ENCODE measurements at regions of chr5 and their contacts with region 1.

Region 1: DNA sequence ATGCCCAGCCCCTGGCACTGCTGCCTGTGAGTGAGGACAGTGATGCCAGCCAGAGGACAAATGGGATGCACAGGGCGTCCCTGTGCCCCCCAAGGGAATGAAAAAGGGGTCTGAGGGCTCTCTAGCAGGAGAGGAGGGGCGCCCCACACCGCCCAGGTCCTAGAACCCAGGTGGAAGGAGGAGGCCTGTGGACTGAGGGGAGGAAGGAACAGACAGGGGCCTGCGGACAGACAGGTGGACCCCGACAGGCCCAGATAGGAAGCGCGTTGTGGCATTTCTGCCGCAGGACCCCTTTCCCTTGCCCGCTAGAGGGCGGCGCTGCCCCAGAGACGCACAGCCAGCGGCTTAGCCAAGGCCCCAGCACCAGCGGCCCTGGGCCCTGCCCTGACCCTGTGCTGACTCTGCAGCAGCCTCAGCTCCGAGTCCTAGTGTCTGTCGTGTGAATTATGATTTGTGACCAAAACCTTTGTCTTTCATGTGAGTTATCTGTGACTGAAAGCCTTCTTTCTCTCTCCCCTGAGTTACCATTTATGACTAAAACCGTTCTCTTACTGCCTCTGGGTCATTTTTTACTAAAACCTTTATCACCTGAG is 30.7 kb downstream of the TRIP13 start:
- DNase-seq: peak; percentile 86
- H3K4me3 Mint-ChIP-seq: no peak overlapping the region
- H3K27ac Mint-ChIP-seq: no peak overlapping the region
- H3K4me1 Mint-ChIP-seq: peaks cover 13% of the 10 kb centered on the region
- H3K27me3 Mint-ChIP-seq: peaks cover 25% of the 10 kb centered on the region

Region 2: GRCh38 chr5:458547-459353 is 464.6 kb before region 1 on chr5:
- CTCF ChIA-PET with region 1: no interaction called
- DNase-seq: peak; percentile 52
- H3K4me3 Mint-ChIP-seq: no peak overlapping the region
- H3K27ac Mint-ChIP-seq: peak overlapping the region; percentile 66
- H3K4me1 Mint-ChIP-seq: peaks cover 52% of the 10 kb centered on the region
- H3K27me3 Mint-ChIP-seq: no peaks in the 10 kb centered on the region

Region 3: DNA sequence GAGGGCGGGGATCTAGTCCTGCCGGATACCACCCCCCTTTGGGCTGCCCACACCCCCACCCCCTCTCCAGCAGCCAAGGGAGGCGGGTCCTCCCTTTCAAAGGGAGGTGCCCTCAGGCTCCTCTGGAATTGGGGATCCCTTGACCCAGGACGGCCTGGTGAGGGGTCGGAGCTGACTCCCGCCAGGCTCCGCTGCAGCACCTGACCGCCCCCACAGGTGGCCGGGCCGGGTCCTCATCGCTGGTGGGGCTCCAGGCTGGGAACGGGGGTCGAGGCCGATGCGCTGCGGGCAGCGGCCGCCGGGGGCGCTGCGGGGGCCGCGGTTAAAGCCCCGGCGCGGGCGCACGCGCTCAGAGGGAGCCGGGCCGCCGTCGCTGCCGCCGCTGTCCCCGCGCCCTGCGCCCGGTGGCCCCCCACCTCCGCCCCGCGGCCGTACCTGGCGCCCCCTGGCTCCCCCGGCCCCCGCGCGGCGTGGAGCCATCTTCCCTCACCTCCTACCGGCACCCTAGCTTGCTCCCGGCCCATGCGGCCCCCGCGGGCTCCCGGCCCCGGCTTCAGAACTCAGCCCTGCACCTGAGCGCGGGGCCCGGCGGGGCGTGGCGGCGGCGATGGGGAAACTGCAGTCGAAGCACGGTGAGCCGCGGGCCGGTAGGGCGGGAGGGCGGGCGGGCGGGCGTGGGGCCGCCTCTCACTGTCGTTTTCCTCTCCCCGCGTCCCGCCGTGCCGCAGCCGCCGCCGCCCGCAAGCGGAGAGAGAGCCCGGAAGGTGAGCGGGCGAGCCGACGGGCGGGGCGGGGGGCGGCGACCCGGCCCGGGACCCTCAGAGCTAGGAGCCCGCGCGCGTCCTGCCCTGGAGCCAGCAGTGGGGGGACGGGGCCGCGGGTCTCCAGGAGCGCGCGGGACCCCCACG is 85.3 kb after region 1 on chr5 and contains the start of gene NKD2:
- CTCF ChIA-PET with region 1: interaction called, 28 read pairs
- DNase-seq: peak; percentile 53
- H3K4me3 Mint-ChIP-seq: peak within 1 kb of the TSS; percentile 48
- H3K27ac Mint-ChIP-seq: no peak within 1 kb of the TSS
- H3K4me1 Mint-ChIP-seq: peaks cover 32% of the 10 kb centered on the region
- H3K27me3 Mint-ChIP-seq: peaks cover 83% of the 10 kb centered on the region

Region 4: GRCh38 chr5:1182633-1183423 is 259.5 kb after region 1 on chr5:
- CTCF ChIA-PET with region 1: no interaction called
- DNase-seq: no peak
- H3K4me3 Mint-ChIP-seq: no peak overlapping the region
- H3K27ac Mint-ChIP-seq: no peak overlapping the region
- H3K4me1 Mint-ChIP-seq: no peaks in the 10 kb centered on the region
- H3K27me3 Mint-ChIP-seq: peaks cover 9% of the 10 kb centered on the region

Measured in activated naive CD4-positive, alpha-beta T cell treated with anti-CD3 and anti-CD28 coated beads, Interleukin-2, amount 10 ng/mL, durations not matched to agents 7 days and 5 days (primary cell).